ENCODE measurements at regions of chr7 and their contacts with region 1.

Region 1: DNA sequence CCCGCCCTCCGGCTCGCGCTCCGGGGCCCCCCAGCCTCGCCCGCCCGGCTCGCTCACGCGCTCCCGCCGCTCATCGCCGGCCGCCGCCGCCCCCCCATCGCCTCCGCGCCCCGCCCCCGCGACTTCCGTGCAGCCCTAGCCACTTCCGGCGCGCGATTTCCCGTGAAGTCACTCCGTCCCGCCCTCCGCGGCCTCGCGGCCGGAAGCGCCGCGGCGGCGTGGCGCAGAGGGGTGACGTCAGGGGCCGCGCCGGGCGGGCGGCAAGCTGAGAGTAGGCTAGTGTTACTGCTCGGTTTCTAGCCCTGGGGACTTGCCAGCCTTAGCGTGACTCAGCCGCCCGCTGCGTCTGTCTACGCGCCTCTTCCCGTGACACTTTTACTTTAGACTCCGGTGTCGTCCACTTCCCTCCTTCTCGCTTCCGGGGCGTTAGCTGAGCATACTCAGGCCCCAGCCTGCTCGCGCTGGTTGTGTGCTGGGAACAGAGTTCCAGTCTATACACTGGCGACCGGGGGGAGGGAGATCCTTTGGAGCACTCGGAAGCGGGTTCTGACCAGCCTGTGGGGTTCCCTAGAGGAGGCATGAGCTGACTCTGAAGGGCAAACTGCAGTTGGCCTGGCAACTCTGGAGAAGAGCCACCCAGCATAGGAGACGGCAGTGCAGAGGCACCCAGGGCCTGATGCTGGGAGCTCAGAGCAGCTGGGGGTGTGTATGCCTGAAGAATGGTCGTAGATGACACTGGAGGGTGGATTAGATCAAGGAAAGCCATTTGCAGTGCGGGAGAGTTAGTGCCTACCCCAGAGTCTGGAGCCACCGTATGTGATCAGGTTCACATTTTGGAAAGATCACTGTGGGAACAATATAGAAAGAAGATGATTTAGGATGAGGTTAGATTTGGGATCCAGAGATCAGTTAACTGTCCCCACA is at the start of gene PURB:
- DNase-seq: peak; percentile 90 to 94
- ATAC-seq: peak; percentile 92 to 95
- H3K4me3 ChIP-seq: peak within 1 kb of the TSS; percentile 96
- H3K27ac ChIP-seq: peak within 1 kb of the TSS; percentile 91 to 96
- H3K4me1 ChIP-seq: peaks cover 40% of the 10 kb centered on the region
- CTCF ChIP-seq: no peak
- EP300 ChIP-seq: no peak
- POLR2A ChIP-seq: peak; percentile 70
- RAD21 ChIP-seq: no peak
- polyA plus RNA-seq, gene PURB: 5.7 and 6.4 TPM in 2 replicates

Region 2: GRCh38 chr7:44858161-44858560 is 27.5 kb before region 1 on chr7:
- CTCF ChIA-PET with region 1: interaction called, 14 read pairs
- POLR2A ChIA-PET with region 1: interaction called, 10 read pairs
- DNase-seq: no peak
- ATAC-seq: no peak
- H3K4me3 ChIP-seq: no peak overlapping the region
- H3K27ac ChIP-seq: no peak overlapping the region
- H3K4me1 ChIP-seq: peaks cover 11% of the 10 kb centered on the region; the same call in 1 of the 3 replicates
- CTCF ChIP-seq: no peak
- EP300 ChIP-seq: no peak
- POLR2A ChIP-seq: no peak
- RAD21 ChIP-seq: no peak

Region 3: DNA sequence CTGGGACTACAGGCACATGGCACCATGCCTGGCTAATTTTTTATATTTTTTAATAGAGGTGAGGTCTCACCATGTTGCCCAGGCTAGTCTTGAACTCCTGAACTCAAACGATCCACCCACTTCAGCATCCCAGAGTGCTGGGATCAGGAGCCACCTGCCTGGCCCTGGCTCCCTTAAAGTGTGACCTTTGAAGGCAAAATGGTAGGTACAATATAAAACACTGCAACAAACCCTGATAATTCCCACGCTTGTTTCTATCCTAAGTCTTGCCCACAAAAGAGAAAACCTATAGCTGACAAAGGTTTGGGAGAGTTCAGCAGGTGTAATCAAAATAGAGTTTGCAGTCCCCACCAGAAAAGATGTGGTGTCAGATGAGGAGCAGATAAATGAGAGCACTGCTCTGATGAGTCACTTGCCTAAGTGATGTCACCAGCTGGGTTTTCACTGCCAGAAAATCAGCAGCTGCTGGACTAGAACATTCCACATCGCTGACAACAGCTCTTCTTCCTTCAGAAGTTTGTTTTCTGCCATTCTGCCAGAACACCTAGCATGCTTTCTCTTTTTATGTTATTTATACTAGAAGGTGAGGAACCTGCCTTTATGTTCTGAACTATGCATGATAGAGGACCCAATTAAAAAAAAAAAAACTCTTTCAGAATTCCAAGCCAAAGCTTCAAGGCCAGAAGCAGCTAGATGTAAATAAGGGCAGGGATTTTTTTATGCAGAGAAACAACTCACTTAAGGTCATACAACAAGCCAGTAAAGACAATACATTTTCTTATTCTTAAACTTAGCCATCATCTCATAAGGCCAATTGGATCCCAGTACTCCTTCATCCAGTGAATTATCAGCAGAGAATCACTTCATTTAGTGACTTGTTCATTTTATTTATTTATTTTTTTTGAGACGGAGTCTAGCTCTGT is 18.3 kb before region 1 on chr7:
- CTCF ChIA-PET with region 1: interaction called, 4 read pairs
- POLR2A ChIA-PET with region 1: interaction called, 21 read pairs
- DNase-seq: peak; percentile 58 to 66
- ATAC-seq: peak; percentile 88 to 98
- H3K4me3 ChIP-seq: no peak overlapping the region
- H3K27ac ChIP-seq: peak overlapping the region; percentile 53 to 60; a peak in 4 of 6 replicates
- H3K4me1 ChIP-seq: peaks cover 25% of the 10 kb centered on the region
- CTCF ChIP-seq: no peak
- EP300 ChIP-seq: no peak
- POLR2A ChIP-seq: no peak
- RAD21 ChIP-seq: no peak

Region 4: GRCh38 chr7:44921607-44922359 is 36.1 kb after region 1 on chr7:
- CTCF ChIA-PET with region 1: interaction called, 12 read pairs
- POLR2A ChIA-PET with region 1: interaction called, 3 read pairs
- DNase-seq: peak; percentile 47 to 70
- ATAC-seq: peak; percentile 97 to 98
- H3K4me3 ChIP-seq: no peak overlapping the region
- H3K27ac ChIP-seq: peak overlapping the region; percentile 31 to 46; a peak in 2 of 6 replicates
- H3K4me1 ChIP-seq: no peaks in the 10 kb centered on the region
- CTCF ChIP-seq: peak; percentile 75
- EP300 ChIP-seq: no peak
- POLR2A ChIP-seq: no peak
- RAD21 ChIP-seq: peak; percentile 78 to 83